Activated B cell treated with CpG ODN at 0.5 μM for 24 hours (primary cell): ENCODE measurements at regions of chrX and their contacts with region 1.

Region 1: GRCh38 chrX:57573754-57574153 is 18.1 kb upstream of the ZXDB start:
- DNase-seq: no peak
- ATAC-seq: no peak
- H3K4me3 Mint-ChIP-seq: no peak overlapping the region
- H3K27ac Mint-ChIP-seq: no peak overlapping the region
- H3K4me1 Mint-ChIP-seq: no peaks in the 10 kb centered on the region
- H3K27me3 Mint-ChIP-seq: no peaks in the 10 kb centered on the region
- CTCF ChIP-seq: no peak

Region 2: DNA sequence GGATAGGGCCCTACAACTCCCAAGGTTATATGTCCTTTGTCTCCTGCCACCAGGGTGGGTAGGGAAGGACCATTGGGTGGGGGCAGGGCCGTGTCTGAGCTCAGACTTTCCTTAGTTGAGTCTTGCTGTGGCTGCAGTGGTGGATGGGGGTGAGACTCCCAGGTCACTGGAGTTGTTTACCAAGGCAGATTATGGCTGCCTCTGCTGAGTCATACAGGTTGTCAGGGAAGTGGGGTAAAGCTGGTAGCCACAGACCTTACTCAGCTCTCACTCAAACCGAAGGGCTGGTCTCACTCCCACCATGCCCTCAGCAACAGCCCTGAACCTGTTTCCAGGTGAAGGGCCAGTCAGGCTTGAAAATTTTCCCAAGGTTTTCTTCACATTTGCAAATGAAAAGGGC is 346.1 kb before region 1 on chrX:
- CTCF ChIA-PET with region 1: no interaction called
- POLR2A ChIA-PET with region 1: no interaction called
- intact Hi-C with region 1: no loop called
- DNase-seq: no peak
- ATAC-seq: no peak
- H3K4me3 Mint-ChIP-seq: no peak overlapping the region
- H3K27ac Mint-ChIP-seq: no peak overlapping the region
- H3K4me1 Mint-ChIP-seq: no peaks in the 10 kb centered on the region
- H3K27me3 Mint-ChIP-seq: no peaks in the 10 kb centered on the region
- CTCF ChIP-seq: no peak

Region 3: DNA sequence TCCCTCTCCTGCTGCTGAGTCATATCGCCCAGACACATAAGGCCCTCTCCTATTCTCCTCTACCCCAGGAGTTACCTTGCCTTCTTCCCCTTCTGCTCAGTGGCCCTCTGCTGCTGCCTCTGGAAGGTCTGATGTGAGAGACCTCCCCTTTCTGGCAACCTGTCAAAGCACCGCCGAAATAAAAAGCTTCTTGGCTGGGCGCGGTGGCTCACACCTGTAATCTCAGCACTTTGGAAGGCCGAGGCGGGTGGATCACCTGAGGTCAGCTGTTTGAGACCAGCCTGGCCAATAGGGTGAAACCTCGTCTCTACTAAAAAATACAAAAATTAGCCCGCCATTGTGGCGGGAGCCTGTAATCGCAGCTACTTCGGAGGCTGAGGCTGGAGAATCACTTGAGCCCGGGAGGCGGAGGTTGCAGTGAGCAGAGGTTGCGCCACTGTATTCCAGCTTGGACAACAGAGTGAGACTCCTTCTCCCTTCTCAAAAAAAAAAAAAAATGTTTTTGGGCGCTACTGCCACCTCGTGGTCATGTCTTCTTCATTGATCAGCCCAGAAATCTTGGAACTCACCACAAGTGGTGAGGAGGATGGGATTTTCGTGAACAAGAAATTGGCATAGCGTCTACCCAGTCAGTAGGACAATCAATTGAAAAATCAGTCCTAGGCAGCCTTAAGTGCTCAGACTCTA is 345.1 kb after region 1 on chrX:
- CTCF ChIA-PET with region 1: no interaction called
- POLR2A ChIA-PET with region 1: no interaction called
- intact Hi-C with region 1: loop called (anchors 1 kb)
- DNase-seq: no peak
- ATAC-seq: no peak
- H3K4me3 Mint-ChIP-seq: no peak overlapping the region
- H3K27ac Mint-ChIP-seq: no peak overlapping the region
- H3K4me1 Mint-ChIP-seq: peaks cover 4% of the 10 kb centered on the region
- H3K27me3 Mint-ChIP-seq: no peaks in the 10 kb centered on the region
- CTCF ChIP-seq: no peak

Region 4: DNA sequence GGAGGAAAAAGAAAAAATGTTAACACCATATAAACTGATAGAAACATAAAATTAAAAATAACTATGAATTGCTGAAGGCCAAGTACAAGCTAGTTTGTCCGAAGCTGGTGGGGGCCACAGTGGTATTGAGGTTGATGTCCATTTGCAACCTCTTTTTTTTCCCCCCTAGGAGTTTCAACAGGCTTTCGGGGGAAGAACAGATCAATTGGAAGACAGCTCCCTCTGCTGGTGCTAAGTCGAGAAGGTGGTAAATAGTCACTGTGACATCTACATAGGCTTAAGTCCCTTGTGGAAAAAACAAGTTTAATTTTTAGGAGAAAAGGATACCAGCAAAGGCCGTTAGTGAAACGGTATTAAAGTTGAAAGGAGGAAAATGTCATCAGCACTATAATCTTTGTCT is 452.2 kb after region 1 on chrX:
- CTCF ChIA-PET with region 1: no interaction called
- POLR2A ChIA-PET with region 1: no interaction called
- intact Hi-C with region 1: loop called (anchors 2 kb)
- DNase-seq: no peak
- ATAC-seq: no peak
- H3K4me3 Mint-ChIP-seq: no peak overlapping the region
- H3K27ac Mint-ChIP-seq: no peak overlapping the region
- H3K4me1 Mint-ChIP-seq: no peaks in the 10 kb centered on the region
- H3K27me3 Mint-ChIP-seq: no peaks in the 10 kb centered on the region
- CTCF ChIP-seq: no peak